ENCODE measurements at regions of chr12 and their contacts with region 1.

Region 1: GRCh38 chr12:82225871-82226270 is 132.3 kb downstream of the CCDC59 start:
- DNase-seq: no peak
- ATAC-seq: no peak
- H3K4me3 ChIP-seq: no peak overlapping the region
- H3K27ac ChIP-seq: no peak overlapping the region
- H3K4me1 ChIP-seq: no peaks in the 10 kb centered on the region
- H3K27me3 ChIP-seq: no peaks in the 10 kb centered on the region
- CTCF ChIP-seq: no peak
- POLR2A ChIP-seq: no peak

Region 2: DNA sequence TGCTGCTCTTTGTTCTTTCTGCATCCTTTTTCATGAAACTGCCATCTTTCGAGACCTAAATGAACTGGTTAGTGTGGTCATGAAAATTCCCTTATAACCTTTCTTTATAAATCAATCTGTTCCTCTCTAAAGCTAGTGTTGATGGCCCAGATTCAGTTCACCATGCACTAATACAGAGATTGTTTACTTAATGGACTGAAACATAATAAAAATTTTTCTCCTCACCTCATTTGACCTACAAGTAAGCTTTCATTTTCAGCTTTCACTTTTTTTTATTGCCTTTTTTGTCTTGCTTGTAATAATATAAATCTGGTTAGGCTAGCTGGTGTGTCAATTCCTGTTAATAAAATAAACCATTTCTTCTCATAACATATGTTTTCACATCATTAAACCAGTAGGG is 51.5 kb before region 1 on chr12:
- intact Hi-C with region 1: loop called in 1 of 10 experiments (anchors 10 kb)
- DNase-seq: no peak
- ATAC-seq: no peak
- H3K4me3 ChIP-seq: no peak overlapping the region
- H3K27ac ChIP-seq: no peak overlapping the region
- H3K4me1 ChIP-seq: no peaks in the 10 kb centered on the region
- H3K27me3 ChIP-seq: no peaks in the 10 kb centered on the region
- CTCF ChIP-seq: no peak
- POLR2A ChIP-seq: no peak

Region 3: DNA sequence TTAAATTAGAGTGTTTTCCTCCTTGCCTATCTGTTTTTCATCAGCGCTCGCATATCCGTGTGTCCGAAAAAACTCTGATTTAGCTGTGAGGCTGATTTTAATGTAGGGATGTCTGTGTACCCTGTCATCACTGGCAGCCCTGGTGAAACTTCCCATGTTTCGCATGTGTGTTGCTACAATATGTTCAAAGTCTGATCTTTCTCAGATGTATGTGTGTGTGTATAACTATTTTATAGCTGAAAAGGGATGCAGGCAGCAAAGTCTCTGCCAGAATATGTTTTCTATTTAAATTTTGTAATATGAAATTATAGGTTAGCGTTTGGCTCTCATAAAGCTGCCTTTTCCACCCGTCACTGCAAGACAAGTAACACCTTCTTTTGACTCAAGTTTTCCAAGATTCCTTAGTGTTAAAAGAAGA is 615.6 kb after region 1 on chr12:
- intact Hi-C with region 1: no loop called
- DNase-seq: no peak
- ATAC-seq: no peak
- H3K4me3 ChIP-seq: peak overlapping the region in 1 of 12 donors; percentile 10
- H3K27ac ChIP-seq: no peak overlapping the region
- H3K4me1 ChIP-seq: peaks cover 0 to 5% (median 0%) of the 10 kb centered on the region in 12 donors
- H3K27me3 ChIP-seq: no peaks in the 10 kb centered on the region
- CTCF ChIP-seq: no peak
- POLR2A ChIP-seq: no peak